ENCODE measurements at regions of chr5 and their contacts with region 1.

Region 1: GRCh38 chr5:138226910-138227309 is 13.8 kb upstream of the CDC23 start:
- DNase-seq: no peak
- ATAC-seq: no peak
- H3K4me3 ChIP-seq: no peak overlapping the region
- H3K27ac ChIP-seq: no peak overlapping the region
- H3K4me1 ChIP-seq: peaks cover 0 to 27% (median 14%) of the 10 kb centered on the region in 9 donors
- H3K27me3 ChIP-seq: no peaks in the 10 kb centered on the region
- CTCF ChIP-seq: no peak

Region 2: GRCh38 chr5:138282920-138283742 is 56.2 kb after region 1 on chr5:
- intact Hi-C with region 1: loop called (anchors 2 to 10 kb)
- DNase-seq: peak in 1 of 2 donors; percentile 35
- ATAC-seq: peak in 7 of 8 donors; percentile 67 to 90 (median 86)
- H3K4me3 ChIP-seq: no peak overlapping the region
- H3K27ac ChIP-seq: no peak overlapping the region
- H3K4me1 ChIP-seq: peaks cover 0 to 3% (median 0%) of the 10 kb centered on the region in 9 donors
- H3K27me3 ChIP-seq: no peaks in the 10 kb centered on the region
- CTCF ChIP-seq: peak; percentile 25 to 69 (median 54)

Region 3: GRCh38 chr5:138352071-138352721 is 125.3 kb after region 1 on chr5 and contains the start of gene KDM3B:
- intact Hi-C with region 1: loop called in 1 of 10 experiments (anchors 10 kb)
- DNase-seq: peak; percentile 76 to 88
- ATAC-seq: peak; percentile 77 to 90 (median 85)
- H3K4me3 ChIP-seq: peak within 1 kb of the TSS; percentile 73 to 99 (median 94)
- H3K27ac ChIP-seq: peak within 1 kb of the TSS; percentile 86 to 99 (median 97)
- H3K4me1 ChIP-seq: peaks cover 8 to 70% (median 51%) of the 10 kb centered on the region in 9 donors
- H3K27me3 ChIP-seq: no peaks in the 10 kb centered on the region
- CTCF ChIP-seq: peak; percentile 82 to 99 (median 90)
- total RNA-seq, gene KDM3B: 31.9 to 57.3 (median 48.3) TPM